MCF 10A (cell line): ENCODE measurements at regions of chr13 and their contacts with region 1.

Region 1: DNA sequence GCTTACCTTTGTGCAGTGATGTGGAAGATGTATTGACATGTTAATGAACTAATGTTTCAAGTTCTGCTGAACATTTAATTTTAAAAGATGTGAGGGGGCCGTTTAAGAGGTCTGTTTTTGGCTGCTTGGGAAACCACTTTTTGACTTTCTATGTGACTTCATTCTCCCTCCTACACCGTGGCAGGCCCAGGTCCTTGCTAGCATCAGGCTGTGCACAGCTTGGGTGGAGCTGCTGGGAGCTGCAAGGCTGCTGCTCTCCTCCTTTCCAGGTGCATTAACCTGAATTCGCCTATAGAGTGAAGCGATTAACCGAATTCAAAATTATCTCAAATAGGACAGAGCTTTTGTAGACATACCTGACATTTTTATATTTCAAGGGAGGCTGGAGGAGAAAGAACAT is 249.1 kb downstream of the FGF14 start:
- DNase-seq: no peak
- H3K4me3 Mint-ChIP-seq: no peak overlapping the region
- H3K27ac Mint-ChIP-seq: no peak overlapping the region
- H3K4me1 Mint-ChIP-seq: no peaks in the 10 kb centered on the region
- H3K27me3 Mint-ChIP-seq: no peaks in the 10 kb centered on the region
- CTCF ChIP-seq: no peak

Region 2: GRCh38 chr13:102191951-102192471 is 39.2 kb after region 1 on chr13:
- CTCF ChIA-PET with region 1: no interaction called
- POLR2A ChIA-PET with region 1: no interaction called
- intact Hi-C with region 1: loop called (anchors 2 kb)
- DNase-seq: peak; percentile 3
- H3K4me3 Mint-ChIP-seq: no peak overlapping the region
- H3K27ac Mint-ChIP-seq: no peak overlapping the region
- H3K4me1 Mint-ChIP-seq: peaks cover 25% of the 10 kb centered on the region
- H3K27me3 Mint-ChIP-seq: no peaks in the 10 kb centered on the region
- CTCF ChIP-seq: no peak